Activated B cell treated with CpG ODN at 0.5 μM for 24 hours (primary cell): ENCODE measurements at regions of chr17 and their contacts with region 1.

Region 1: DNA sequence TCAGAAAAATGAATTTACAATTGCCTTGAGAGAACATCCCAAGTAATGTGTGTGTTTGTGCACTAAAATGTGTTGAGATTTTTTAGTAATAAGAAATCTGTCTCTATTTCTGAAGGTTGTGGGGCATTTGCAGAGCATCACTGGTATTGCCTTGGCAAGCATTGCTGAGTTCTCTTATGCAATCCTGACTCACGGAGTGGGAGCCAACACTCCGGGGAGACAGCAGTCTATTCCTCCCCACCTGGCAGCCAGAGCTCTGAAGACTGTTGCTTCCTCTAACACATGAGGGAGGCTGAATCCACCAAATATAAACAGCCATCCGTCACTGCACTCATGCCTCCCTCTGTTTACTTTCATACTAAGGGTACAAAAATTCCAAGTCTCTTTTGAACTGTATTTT is 10.6 kb downstream of the CNTD1 start:
- DNase-seq: no peak
- ATAC-seq: no peak
- H3K4me3 Mint-ChIP-seq: no peak overlapping the region
- H3K27ac Mint-ChIP-seq: no peak overlapping the region
- H3K4me1 Mint-ChIP-seq: no peaks in the 10 kb centered on the region
- H3K27me3 Mint-ChIP-seq: no peaks in the 10 kb centered on the region
- CTCF ChIP-seq: no peak

Region 2: GRCh38 chr17:42276359-42276608 is 533.0 kb before region 1 on chr17 and contains the start of gene STAT5B:
- CTCF ChIA-PET with region 1: no interaction called
- POLR2A ChIA-PET with region 1: interaction called, 11 read pairs
- intact Hi-C with region 1: no loop called
- DNase-seq: peak; percentile 79
- ATAC-seq: peak; percentile 81
- H3K4me3 Mint-ChIP-seq: peak within 1 kb of the TSS; percentile 92
- H3K27ac Mint-ChIP-seq: peak within 1 kb of the TSS; percentile 81
- H3K4me1 Mint-ChIP-seq: peaks cover 52% of the 10 kb centered on the region
- H3K27me3 Mint-ChIP-seq: no peaks in the 10 kb centered on the region
- CTCF ChIP-seq: no peak
- total RNA-seq, gene STAT5B: 80.3 and 82.6 TPM in 2 replicates